ENCODE measurements at regions of chr3 and their contacts with region 1.

Region 1: GRCh38 chr3:130759699-130760338 is 13.2 kb upstream of the PIK3R4 start:
- DNase-seq: peak; percentile 69
- CTCF ChIP-seq: peak; percentile 48

Region 2: GRCh38 chr3:130892759-130893375 is 133.0 kb after region 1 on chr3:
- in situ Hi-C with region 1: loop called (anchors 5 kb)
- DNase-seq: peak; percentile 69
- CTCF ChIP-seq: peak; percentile 56

Region 3: DNA sequence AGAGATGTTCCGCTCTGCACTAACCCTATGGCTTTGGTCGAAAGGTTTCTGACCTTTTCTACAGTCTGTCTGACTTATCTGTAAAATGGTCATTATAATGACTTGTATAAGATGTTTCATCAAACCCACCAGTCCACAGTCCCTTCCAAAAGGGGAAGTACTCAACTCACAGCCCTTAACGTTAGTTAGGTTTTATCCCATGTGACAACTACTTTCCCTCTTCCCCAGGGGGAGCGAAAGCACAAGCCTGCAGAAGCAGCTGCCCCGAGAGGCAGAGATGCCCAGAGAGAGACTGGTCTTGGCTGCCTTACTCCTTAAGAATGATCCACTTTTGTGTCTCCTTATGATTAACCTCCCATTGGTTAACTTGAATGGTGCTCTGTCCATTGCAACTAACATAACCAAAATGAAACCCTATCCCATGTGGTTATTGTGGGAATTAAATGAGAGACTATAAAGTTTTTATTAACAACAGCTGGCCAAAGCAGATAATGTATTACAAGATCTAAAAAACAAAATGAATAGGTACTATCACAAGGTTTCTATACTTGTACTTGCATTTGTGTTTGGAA is 260.4 kb after region 1 on chr3:
- in situ Hi-C with region 1: loop called (anchors 25 kb)
- DNase-seq: no peak
- CTCF ChIP-seq: no peak

Region 4: DNA sequence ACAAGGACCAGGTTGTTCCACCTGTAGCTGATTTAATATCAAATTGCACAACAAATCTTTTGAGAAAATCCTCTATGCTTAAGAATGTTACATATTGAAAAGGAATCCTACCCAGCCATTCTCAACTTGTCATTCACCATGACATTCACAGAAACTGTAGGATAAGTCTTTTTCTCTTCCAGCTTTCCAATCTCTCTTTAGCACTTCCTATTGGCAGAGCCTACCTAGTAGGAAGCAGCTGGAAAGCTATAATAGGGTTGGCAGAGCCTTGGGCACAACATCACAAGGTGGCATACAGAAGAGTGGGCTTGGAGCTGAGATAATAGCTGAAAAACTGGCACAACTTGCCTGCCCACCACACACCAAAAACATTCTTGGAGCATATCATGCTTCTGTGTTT is 554.5 kb after region 1 on chr3:
- in situ Hi-C with region 1: no loop called
- DNase-seq: no peak
- CTCF ChIP-seq: no peak

Measured in GM13976 (cell line).